ENCODE measurements at regions of chr7 and their contacts with region 1.

Region 1: GRCh38 chr7:128940494-128941322 is 3.0 kb downstream of the IRF5 start:
- DNase-seq: peak; percentile 86 to 90 (median 89)
- H3K4me3 ChIP-seq: peak overlapping the region; percentile 86 to 97 (median 87)
- H3K4me3 Mint-ChIP-seq: peak overlapping the region; percentile 99
- H3K27ac ChIP-seq: peak overlapping the region; percentile 90 to 97
- H3K27ac Mint-ChIP-seq: peak overlapping the region; percentile 94 to 98 (median 96)
- H3K4me1 ChIP-seq: peaks cover 72 to 80% of the 10 kb centered on the region in 2 donors
- H3K4me1 Mint-ChIP-seq: peaks cover 69% of the 10 kb centered on the region
- H3K27me3 ChIP-seq: no peaks in the 10 kb centered on the region
- H3K27me3 Mint-ChIP-seq: no peaks in the 10 kb centered on the region
- CTCF ChIP-seq: no peak

Region 2: GRCh38 chr7:127375631-127376030 is 1565.1 kb before region 1 on chr7:
- intact Hi-C with region 1: loop called in 1 of 2 experiments (anchors 10 kb)
- DNase-seq: no peak
- H3K4me3 ChIP-seq: no peak overlapping the region
- H3K4me3 Mint-ChIP-seq: no peak overlapping the region
- H3K27ac ChIP-seq: no peak overlapping the region
- H3K27ac Mint-ChIP-seq: no peak overlapping the region
- H3K4me1 ChIP-seq: no peaks in the 10 kb centered on the region
- H3K4me1 Mint-ChIP-seq: peaks cover 7% of the 10 kb centered on the region
- H3K27me3 ChIP-seq: no peaks in the 10 kb centered on the region
- H3K27me3 Mint-ChIP-seq: no peaks in the 10 kb centered on the region
- CTCF ChIP-seq: no peak

Region 3: DNA sequence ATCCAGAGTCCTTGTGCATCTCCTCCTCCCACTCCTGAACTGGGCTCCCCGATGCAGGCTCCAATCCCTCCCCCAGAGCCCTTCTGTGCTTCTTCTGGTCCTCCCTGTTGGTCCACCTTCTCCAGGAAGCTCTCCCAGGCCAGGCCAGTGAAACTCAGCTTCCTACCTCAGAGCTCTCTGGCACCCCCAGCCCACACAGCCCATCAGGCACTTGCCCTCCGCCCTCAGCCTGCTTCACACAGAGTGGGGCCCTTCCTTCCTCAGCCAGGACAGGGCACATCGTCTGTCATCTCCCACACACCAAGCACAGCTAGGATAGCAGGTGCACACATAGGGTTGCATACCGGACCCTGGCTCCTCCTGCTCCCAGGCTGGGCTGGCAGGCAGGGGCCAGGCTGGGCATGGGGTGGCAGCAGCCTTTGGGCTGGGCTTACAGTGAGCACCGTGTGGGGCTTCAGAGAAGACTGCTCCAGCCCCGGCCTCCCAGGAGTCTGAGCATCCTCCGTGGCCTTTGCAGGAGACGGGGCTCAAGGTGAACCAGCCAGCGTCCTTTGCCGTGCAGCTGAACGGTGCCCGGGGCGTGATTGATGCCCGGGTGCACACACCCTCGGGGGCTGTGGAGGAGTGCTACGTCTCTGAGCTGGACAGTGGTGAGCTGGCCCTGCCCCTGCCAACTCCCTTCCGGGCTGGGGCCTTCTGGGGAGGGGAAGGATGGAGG is 84.5 kb before region 1 on chr7:
- intact Hi-C with region 1: no loop called
- DNase-seq: no peak
- H3K4me3 ChIP-seq: no peak overlapping the region
- H3K4me3 Mint-ChIP-seq: no peak overlapping the region
- H3K27ac ChIP-seq: no peak overlapping the region
- H3K27ac Mint-ChIP-seq: no peak overlapping the region
- H3K4me1 ChIP-seq: no peaks in the 10 kb centered on the region
- H3K4me1 Mint-ChIP-seq: no peaks in the 10 kb centered on the region
- H3K27me3 ChIP-seq: no peaks in the 10 kb centered on the region
- H3K27me3 Mint-ChIP-seq: peaks cover 1 to 14% (median 5%) of the 10 kb centered on the region in 3 donors
- CTCF ChIP-seq: no peak